Caco-2 (cell line): ENCODE measurements at regions of chr1 and their contacts with region 1.

Region 1: GRCh38 chr1:49408346-49408745 is 615.4 kb downstream of the AGBL4 start:
- DNase-seq: no peak
- H3K4me3 ChIP-seq: no peak overlapping the region
- H3K4me3 Mint-ChIP-seq: no peak overlapping the region
- H3K27ac Mint-ChIP-seq: no peak overlapping the region
- H3K4me1 ChIP-seq: no peaks in the 10 kb centered on the region
- H3K4me1 Mint-ChIP-seq: no peaks in the 10 kb centered on the region
- H3K27me3 ChIP-seq: no peaks in the 10 kb centered on the region
- H3K27me3 Mint-ChIP-seq: no peaks in the 10 kb centered on the region
- CTCF ChIP-seq: no peak

Region 2: GRCh38 chr1:49436865-49437264 is 28.5 kb after region 1 on chr1:
- CTCF ChIA-PET with region 1: no interaction called
- POLR2A ChIA-PET with region 1: no interaction called
- intact Hi-C with region 1: loop called (anchors 1 kb)
- DNase-seq: no peak
- H3K4me3 ChIP-seq: no peak overlapping the region
- H3K4me3 Mint-ChIP-seq: no peak overlapping the region
- H3K27ac Mint-ChIP-seq: no peak overlapping the region
- H3K4me1 ChIP-seq: no peaks in the 10 kb centered on the region
- H3K4me1 Mint-ChIP-seq: no peaks in the 10 kb centered on the region
- H3K27me3 ChIP-seq: no peaks in the 10 kb centered on the region
- H3K27me3 Mint-ChIP-seq: no peaks in the 10 kb centered on the region
- CTCF ChIP-seq: no peak